Esophagus muscularis mucosa (tissue), 4 donors: ENCODE measurements at regions of chr11 and their contacts with region 1.

Region 1: GRCh38 chr11:62370743-62371440 is 33.6 kb downstream of the ASRGL1 start:
- DNase-seq: no peak
- H3K4me3 ChIP-seq: peak overlapping the region in 2 of 4 donors; percentile 9 to 27
- H3K27ac ChIP-seq: no peak overlapping the region
- H3K4me1 ChIP-seq: no peaks in the 10 kb centered on the region
- H3K27me3 ChIP-seq: no peaks in the 10 kb centered on the region
- CTCF ChIP-seq: no peak
- EP300 ChIP-seq: no peak
- POLR2A ChIP-seq: no peak

Region 2: GRCh38 chr11:62169935-62170548 is 200.8 kb before region 1 on chr11:
- intact Hi-C with region 1: loop called (anchors 10 kb)
- DNase-seq: no peak
- H3K4me3 ChIP-seq: no peak overlapping the region
- H3K27ac ChIP-seq: no peak overlapping the region
- H3K4me1 ChIP-seq: peaks cover 0 to 12% (median 6%) of the 10 kb centered on the region in 4 donors
- H3K27me3 ChIP-seq: peaks cover 0 to 41% (median 3%) of the 10 kb centered on the region in 4 donors
- CTCF ChIP-seq: no peak
- EP300 ChIP-seq: no peak
- POLR2A ChIP-seq: no peak

Region 3: DNA sequence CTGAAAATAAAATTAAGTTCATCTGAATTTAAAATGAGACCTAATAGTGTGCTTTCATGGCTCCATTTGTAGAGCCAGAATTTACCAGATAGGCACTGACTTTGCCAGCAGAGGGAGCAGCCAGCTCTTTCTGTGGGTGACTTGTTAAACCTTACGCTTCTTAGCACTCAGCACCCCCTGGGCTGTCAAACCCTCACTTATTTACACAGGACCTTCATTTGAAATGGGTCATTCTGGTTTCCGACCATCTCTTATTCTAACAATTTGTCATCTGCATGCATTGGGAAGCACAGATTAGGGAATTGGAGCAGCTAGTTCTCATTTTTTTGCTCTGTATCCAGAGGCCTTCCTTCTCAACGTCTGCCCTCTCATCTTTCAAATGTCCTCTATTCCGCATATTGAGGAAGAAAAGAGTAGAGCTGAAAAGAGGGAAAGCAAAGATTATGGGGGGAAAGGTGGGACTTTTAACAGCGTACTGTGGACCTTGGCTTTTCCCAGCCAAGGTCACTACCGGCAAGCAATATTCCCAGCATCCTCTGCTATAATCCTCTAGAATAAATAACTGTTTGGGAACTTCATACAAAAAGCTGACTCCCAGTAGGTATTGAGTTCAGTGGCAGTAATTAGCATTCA is 30.5 kb before region 1 on chr11:
- intact Hi-C with region 1: loop called (anchors 5 kb)
- DNase-seq: no peak
- H3K4me3 ChIP-seq: peak overlapping the region in 1 of 4 donors; percentile 9
- H3K27ac ChIP-seq: peak overlapping the region in 2 of 4 donors; percentile 25 to 46
- H3K4me1 ChIP-seq: peaks cover 4 to 24% (median 16%) of the 10 kb centered on the region in 4 donors
- H3K27me3 ChIP-seq: no peaks in the 10 kb centered on the region
- CTCF ChIP-seq: peak; percentile 59 to 76 (median 65)
- EP300 ChIP-seq: no peak
- POLR2A ChIP-seq: no peak

Region 4: DNA sequence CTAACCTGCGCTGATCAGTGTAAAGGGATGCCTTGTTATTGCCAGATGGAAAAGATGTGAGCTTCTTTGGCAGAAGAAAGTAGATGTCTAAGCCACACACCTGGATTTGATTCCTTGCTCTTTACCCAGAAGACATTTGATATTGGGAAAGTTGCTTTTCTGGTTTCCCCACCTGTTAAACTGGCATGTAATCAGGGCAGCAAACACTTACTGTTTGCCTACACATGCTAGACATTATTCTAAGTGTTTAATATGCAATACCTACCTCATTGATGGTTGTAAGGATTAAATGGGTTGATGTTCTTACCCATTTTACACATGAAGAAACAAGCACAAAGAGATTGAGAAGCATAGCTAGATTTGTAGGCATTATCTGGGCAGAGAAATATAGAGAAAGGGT is 17.0 kb before region 1 on chr11:
- intact Hi-C with region 1: no loop called
- DNase-seq: no peak
- H3K4me3 ChIP-seq: no peak overlapping the region
- H3K27ac ChIP-seq: no peak overlapping the region
- H3K4me1 ChIP-seq: no peaks in the 10 kb centered on the region
- H3K27me3 ChIP-seq: no peaks in the 10 kb centered on the region
- CTCF ChIP-seq: no peak
- EP300 ChIP-seq: no peak
- POLR2A ChIP-seq: no peak

Region 5: DNA sequence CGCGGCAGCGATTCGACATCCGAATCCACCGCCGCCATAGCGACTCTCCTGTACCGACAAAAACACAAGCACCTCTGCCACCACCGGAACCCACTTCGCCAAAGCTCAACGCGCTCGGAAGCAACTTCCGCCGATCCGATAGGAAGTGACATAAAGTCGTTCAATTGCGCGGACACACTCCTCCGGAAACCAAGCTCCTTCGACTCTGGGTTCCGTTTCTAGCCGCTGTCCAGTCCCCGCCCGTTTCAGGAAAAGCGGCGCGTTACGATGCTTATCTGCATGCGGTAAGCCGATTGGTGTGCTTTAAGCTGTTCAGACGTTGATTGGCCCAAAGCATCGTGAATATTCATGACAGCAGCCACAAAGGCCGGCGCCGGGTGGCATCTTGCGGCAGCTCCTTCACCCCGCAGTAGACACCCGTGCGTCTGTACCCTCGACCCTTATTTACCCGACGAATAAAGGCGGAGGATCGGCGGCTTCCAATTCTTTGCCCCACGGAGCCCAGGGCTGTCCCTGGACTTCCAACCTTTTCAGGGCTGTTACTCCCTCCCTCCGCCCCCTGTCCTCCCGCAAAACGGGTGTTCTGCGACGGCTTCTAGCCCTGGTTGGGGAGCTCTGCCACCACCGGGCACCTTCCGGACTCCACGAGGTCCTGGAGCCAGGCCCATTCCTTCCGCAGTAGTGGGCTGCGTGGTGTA is 220.7 kb after region 1 on chr11 and contains the start of gene TUT1:
- intact Hi-C with region 1: no loop called
- DNase-seq: peak; percentile 99
- H3K4me3 ChIP-seq: peak within 1 kb of the TSS; percentile 72 to 93 (median 76)
- H3K27ac ChIP-seq: peak within 1 kb of the TSS; percentile 92 to 97 (median 94)
- H3K4me1 ChIP-seq: peaks cover 33 to 42% (median 40%) of the 10 kb centered on the region in 4 donors
- H3K27me3 ChIP-seq: no peaks in the 10 kb centered on the region
- CTCF ChIP-seq: peak in 1 of 3 experiments; percentile 4
- EP300 ChIP-seq: no peak
- POLR2A ChIP-seq: peak; percentile 65
- total RNA-seq, gene TUT1: 4.2 to 8.0 (median 6.0) TPM

Region 6: DNA sequence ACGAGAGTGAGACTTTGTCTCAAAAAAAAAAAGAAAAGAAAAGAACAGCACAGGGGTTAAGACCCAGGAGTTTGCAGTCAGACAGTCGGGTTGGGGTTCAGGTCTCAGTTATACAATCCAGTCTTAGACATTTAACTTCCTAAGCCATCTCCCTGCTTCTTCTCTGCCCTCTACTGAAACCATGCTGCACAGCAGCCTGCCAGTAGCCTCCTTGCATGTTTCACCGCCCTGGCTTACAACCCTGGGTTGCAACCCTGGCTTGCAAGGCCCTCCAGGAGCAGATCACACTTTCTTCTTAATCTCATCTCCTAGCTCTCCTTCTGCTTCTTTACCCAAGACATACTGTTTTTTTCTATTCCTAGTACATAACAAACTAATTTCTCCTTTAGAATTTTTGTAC is 256.8 kb after region 1 on chr11:
- intact Hi-C with region 1: no loop called
- DNase-seq: no peak
- H3K4me3 ChIP-seq: no peak overlapping the region
- H3K27ac ChIP-seq: no peak overlapping the region
- H3K4me1 ChIP-seq: peaks cover 0 to 7% (median 3%) of the 10 kb centered on the region in 4 donors
- H3K27me3 ChIP-seq: no peaks in the 10 kb centered on the region
- CTCF ChIP-seq: no peak
- EP300 ChIP-seq: no peak
- POLR2A ChIP-seq: no peak

Region 7: DNA sequence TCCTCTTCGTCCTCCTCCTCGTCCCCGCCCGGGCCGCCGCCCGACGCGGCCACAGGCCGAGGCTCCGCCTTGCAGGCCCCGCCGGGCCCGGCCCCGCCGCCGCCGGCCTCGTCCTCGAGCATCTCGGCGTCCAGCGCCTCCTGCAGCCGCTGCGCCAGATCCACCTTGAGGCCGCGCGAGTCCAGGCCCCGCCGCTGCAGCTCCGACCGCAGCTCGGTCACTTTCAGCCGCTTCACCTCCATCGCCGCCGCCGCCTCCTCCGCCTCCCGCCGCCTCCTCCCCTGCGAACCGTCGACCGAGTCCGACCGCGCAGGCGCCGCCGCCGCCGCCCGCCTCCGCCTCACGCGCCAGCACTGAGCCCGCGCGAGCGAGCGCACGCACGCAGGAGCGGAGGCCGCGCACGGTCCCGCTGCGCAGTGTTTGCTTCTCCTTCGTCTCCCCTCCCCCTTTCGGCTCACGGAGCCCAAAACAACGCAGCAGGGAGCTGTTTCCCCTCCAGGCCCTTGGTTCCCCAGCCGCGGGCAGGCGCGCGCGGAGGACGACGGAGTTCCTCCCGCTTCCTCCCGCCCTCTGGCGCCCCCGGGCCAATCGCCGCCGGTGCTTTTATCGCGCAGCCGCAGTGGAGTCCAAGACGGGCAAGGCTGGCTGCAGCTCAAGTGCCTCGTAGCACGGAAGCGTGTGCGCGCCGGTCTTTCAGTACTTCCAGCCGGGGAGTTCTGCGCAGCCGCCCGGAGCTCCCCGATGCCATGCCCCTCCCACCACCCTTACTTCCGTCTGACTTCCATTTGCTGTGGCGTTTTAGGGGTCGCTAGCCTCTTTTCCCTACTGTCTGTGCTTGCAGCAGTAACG is 356.2 kb after region 1 on chr11 and contains the start of gene HNRNPUL2:
- intact Hi-C with region 1: no loop called
- DNase-seq: peak; percentile 98
- H3K4me3 ChIP-seq: peak within 1 kb of the TSS; percentile 85 to 94 (median 90)
- H3K27ac ChIP-seq: peak within 1 kb of the TSS; percentile 89 to 97 (median 94)
- H3K4me1 ChIP-seq: peaks cover 46 to 70% (median 67%) of the 10 kb centered on the region in 4 donors
- H3K27me3 ChIP-seq: no peaks in the 10 kb centered on the region
- CTCF ChIP-seq: peak in 1 of 3 experiments; percentile 10
- EP300 ChIP-seq: no peak
- POLR2A ChIP-seq: peak; percentile 91
- total RNA-seq, gene HNRNPUL2: 19.5 to 45.0 (median 36.7) TPM